ENCODE measurements at regions of chr15 and their contacts with region 1.

Region 1: DNA sequence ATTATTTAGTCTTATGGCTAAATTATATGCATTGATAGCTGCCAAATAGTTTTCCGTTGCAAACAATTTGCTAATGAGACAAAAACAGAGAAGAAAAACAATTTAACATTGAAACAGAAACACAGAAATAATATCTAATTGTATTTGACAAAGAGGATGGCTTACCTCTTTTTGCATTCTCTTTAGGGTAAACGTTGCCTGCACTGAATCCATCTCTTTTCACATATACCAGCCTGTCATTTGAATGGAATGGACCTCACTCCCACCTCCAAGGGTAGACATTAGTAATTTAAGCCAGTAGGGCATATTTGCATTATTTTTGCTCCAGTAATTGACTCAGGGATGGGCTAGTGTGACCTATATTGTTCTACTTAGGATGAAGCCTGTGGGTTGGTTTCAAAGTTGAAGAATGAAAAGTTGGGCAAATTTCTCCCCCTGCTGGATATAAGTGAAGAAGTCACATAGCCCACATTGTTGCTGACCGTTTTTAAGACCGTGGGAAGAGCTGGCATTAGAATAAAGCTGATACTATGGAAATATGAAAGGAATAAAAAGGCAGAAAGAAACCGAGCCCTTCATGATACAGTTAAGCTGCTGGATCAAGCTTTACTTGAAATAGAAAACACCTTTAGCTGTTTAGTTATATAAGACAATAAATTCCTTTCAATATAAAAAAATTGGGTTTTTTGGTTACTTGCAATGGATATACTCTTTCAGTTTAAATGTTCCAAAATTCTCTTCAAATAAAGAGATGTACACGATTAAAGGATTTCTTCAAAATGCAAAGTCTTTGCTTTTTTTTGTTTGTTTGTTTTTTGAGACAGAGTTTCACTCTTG is 26.9 kb downstream of the PIERCE2 start:
- DNase-seq: peak in 4 of 14 experiments; percentile 19 to 66 (median 55)
- ATAC-seq: peak; percentile 62
- H3K4me3 ChIP-seq: no peak overlapping the region
- H3K4me3 Mint-ChIP-seq: no peak overlapping the region
- H3K27ac ChIP-seq: no peak overlapping the region
- H3K27ac Mint-ChIP-seq: no peak overlapping the region
- H3K4me1 ChIP-seq: no peaks in the 10 kb centered on the region
- H3K4me1 Mint-ChIP-seq: no peaks in the 10 kb centered on the region
- H3K27me3 ChIP-seq: no peaks in the 10 kb centered on the region
- H3K27me3 Mint-ChIP-seq: no peaks in the 10 kb centered on the region
- CTCF ChIP-seq: peak; percentile 67

Region 2: GRCh38 chr15:53962332-53963241 is 1472.6 kb before region 1 on chr15:
- CTCF ChIA-PET with region 1: no interaction called
- POLR2A ChIA-PET with region 1: no interaction called
- intact Hi-C with region 1: loop called in 1 of 2 experiments (anchors 10 kb)
- DNase-seq: peak in 3 of 14 experiments; percentile 1 to 8 (median 2)
- ATAC-seq: no peak
- H3K4me3 ChIP-seq: no peak overlapping the region
- H3K4me3 Mint-ChIP-seq: no peak overlapping the region
- H3K27ac ChIP-seq: no peak overlapping the region
- H3K27ac Mint-ChIP-seq: no peak overlapping the region
- H3K4me1 ChIP-seq: no peaks in the 10 kb centered on the region
- H3K4me1 Mint-ChIP-seq: no peaks in the 10 kb centered on the region
- H3K27me3 ChIP-seq: no peaks in the 10 kb centered on the region
- H3K27me3 Mint-ChIP-seq: no peaks in the 10 kb centered on the region
- CTCF ChIP-seq: no peak

Region 3: DNA sequence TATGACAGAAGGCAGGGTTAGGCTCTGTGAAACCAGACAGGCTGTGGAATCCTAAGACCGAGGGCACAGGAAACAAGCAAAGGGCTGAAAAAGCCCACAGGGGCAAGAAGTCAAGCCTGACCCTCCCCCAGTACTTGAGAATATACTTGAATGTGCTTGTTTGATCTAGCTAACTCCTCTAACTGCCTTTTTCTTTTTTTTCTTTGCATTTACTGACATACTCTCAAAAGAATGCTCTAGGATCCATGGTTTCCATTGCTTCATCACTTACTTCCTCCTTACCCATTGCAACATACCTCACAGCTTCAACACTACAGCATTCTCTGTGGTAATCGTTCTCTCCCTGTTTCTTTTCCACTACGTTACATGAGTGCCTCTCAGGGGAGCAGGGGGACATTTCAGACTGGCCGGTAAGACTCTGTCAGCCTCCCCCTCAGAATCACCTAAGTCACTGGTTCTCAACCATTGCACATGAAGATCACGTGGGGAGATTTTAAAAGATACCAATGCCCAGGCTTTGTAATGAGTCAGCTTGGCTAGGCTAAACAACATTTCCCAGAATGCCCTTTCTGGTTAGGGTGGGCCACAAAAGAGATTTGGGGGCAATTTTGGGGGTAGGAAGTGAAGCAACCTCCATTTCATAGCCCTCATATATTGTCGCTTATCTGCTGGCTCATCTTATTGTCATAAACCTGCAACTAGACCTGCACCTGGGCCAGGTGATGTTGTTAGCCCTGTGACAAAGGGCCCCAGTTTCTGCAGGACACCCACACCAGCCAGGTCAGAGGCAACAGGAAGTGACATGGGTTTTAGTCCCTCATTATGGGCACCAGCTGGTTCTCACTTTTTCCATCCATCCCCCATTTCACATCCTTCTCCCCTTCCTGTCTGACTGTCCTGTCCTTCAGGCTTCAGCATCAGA is 213.9 kb before region 1 on chr15:
- CTCF ChIA-PET with region 1: no interaction called
- POLR2A ChIA-PET with region 1: no interaction called
- intact Hi-C with region 1: loop called (anchors 1 kb)
- DNase-seq: peak in 3 of 14 experiments; percentile 41 to 49 (median 48)
- ATAC-seq: no peak
- H3K4me3 ChIP-seq: no peak overlapping the region
- H3K4me3 Mint-ChIP-seq: no peak overlapping the region
- H3K27ac ChIP-seq: no peak overlapping the region
- H3K27ac Mint-ChIP-seq: peak overlapping the region; percentile 18
- H3K4me1 ChIP-seq: peaks cover 47% of the 10 kb centered on the region
- H3K4me1 Mint-ChIP-seq: peaks cover 66% of the 10 kb centered on the region
- H3K27me3 ChIP-seq: no peaks in the 10 kb centered on the region
- H3K27me3 Mint-ChIP-seq: no peaks in the 10 kb centered on the region
- CTCF ChIP-seq: no peak

Region 4: GRCh38 chr15:55518641-55519040 is 83.4 kb after region 1 on chr15:
- CTCF ChIA-PET with region 1: no interaction called
- POLR2A ChIA-PET with region 1: no interaction called
- intact Hi-C with region 1: no loop called
- DNase-seq: no peak
- ATAC-seq: no peak
- H3K4me3 ChIP-seq: no peak overlapping the region
- H3K4me3 Mint-ChIP-seq: no peak overlapping the region
- H3K27ac ChIP-seq: no peak overlapping the region
- H3K27ac Mint-ChIP-seq: no peak overlapping the region
- H3K4me1 ChIP-seq: no peaks in the 10 kb centered on the region
- H3K4me1 Mint-ChIP-seq: no peaks in the 10 kb centered on the region
- H3K27me3 ChIP-seq: no peaks in the 10 kb centered on the region
- H3K27me3 Mint-ChIP-seq: peaks cover 15% of the 10 kb centered on the region
- CTCF ChIP-seq: no peak

Region 5: GRCh38 chr15:55574096-55574495 is 138.9 kb after region 1 on chr15:
- CTCF ChIA-PET with region 1: no interaction called
- POLR2A ChIA-PET with region 1: no interaction called
- intact Hi-C with region 1: no loop called
- DNase-seq: no peak
- ATAC-seq: no peak
- H3K4me3 ChIP-seq: no peak overlapping the region
- H3K4me3 Mint-ChIP-seq: no peak overlapping the region
- H3K27ac ChIP-seq: no peak overlapping the region
- H3K27ac Mint-ChIP-seq: no peak overlapping the region
- H3K4me1 ChIP-seq: no peaks in the 10 kb centered on the region
- H3K4me1 Mint-ChIP-seq: no peaks in the 10 kb centered on the region
- H3K27me3 ChIP-seq: peaks cover 8 to 12% of the 10 kb centered on the region in 2 experiments
- H3K27me3 Mint-ChIP-seq: peaks cover 57% of the 10 kb centered on the region
- CTCF ChIP-seq: no peak

Measured in CD4-positive, alpha-beta T cell (primary cell).